Activated naive CD4-positive, alpha-beta T cell treated with anti-CD3 and anti-CD28 coated beads, Interleukin-2, amount 10 ng/mL, durations not matched to agents 7 days and 5 days (primary cell): ENCODE measurements at regions of chr7 and their contacts with region 1.

Region 1: DNA sequence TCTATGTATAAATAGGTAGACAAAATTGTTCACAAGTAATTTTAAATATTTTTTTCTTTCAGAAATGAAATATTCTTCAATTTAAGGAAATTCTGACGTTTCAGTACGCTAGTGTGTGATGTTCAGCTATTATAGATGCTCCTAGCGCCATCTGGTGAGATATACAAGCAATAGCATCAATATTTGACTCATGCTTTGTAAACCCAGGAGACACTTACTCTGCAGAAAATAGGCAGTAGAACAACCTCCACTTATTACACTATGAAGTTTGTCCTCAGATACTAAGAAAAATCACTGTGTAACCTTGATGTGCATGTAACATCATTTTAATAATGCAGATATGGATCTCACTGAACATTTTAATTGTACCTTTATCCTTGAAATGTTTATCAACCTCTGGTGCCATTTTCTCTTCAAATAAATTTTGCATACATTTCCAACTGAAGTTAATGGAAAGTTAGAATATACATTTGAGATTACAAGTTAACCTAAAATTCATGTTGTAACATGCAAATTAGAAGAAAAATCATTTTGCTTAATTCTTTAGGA is 151.5 kb upstream of the FAM3C start:
- DNase-seq: no peak
- H3K4me3 Mint-ChIP-seq: no peak overlapping the region
- H3K27ac Mint-ChIP-seq: no peak overlapping the region
- H3K4me1 Mint-ChIP-seq: peaks cover 33% of the 10 kb centered on the region
- H3K27me3 Mint-ChIP-seq: peaks cover 6% of the 10 kb centered on the region

Region 2: DNA sequence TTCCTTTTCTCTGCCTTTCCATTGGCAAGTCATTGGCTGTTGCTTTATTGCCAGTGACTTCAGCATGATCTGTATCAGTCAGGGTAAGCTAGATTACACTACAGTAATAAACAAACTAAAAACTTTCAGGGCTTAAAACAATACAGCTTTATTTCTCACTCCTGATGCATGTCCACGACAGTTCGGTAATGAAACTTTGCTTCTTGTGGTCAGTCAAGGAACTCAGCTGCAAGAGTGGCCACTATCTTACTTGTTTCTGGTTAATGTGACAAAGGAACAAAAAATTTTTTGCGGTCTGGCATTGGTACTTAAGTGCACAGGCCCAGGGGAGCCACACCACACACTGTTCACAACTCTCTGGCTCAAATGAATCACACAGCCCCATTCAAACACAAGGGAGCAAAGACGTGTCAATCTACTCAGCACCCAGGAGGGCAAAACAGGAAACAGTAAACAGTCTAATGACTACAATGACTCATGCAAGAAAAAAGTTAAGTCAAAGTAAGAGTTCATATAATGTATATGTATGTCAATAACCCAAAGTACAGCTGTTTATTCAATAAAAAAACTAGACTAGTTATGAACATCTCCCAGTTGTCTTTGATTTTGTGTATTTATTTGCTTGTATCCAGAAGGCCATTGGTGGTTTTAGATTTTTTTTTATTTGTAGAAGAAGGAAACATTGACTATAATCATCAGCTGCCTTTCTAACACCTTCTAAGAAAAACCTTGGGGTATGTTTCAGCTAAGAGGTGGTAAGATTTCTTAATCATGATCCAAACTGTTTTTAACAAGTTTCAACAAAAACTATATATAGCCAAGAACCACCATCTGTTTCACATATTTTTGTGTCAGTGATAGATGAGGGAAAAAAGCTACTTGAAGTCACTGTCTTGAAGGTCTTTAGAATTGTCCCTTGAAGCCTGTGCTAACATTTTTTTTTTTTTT is 17.1 kb before region 1 on chr7:
- CTCF ChIA-PET with region 1: interaction called, 13 read pairs
- DNase-seq: peak; percentile 46
- H3K4me3 Mint-ChIP-seq: no peak overlapping the region
- H3K27ac Mint-ChIP-seq: peak overlapping the region; percentile 91
- H3K4me1 Mint-ChIP-seq: peaks cover 31% of the 10 kb centered on the region
- H3K27me3 Mint-ChIP-seq: no peaks in the 10 kb centered on the region